Posterior cingulate gyrus (tissue), 11 donors: ENCODE measurements at regions of chr15 and their contacts with region 1.

Region 1: GRCh38 chr15:51776952-51777574 is 25.7 kb downstream of the TMOD2 start:
- DNase-seq: peak in 7 of 10 donors; percentile 31 to 87 (median 67)

Region 2: GRCh38 chr15:51649659-51650521 is 127.2 kb before region 1 on chr15:
- intact Hi-C with region 1: loop called (anchors 1 kb)
- DNase-seq: peak in 2 of 10 donors; percentile 10 to 33

Region 3: GRCh38 chr15:51737280-51738017 is 39.6 kb before region 1 on chr15 and contains the start of gene LYSMD2:
- intact Hi-C with region 1: loop called (anchors 5 kb)
- DNase-seq: peak; percentile 48 to 95 (median 68)

Region 4: GRCh38 chr15:51750792-51751685 is 26.0 kb before region 1 on chr15 and contains the start of gene TMOD2:
- intact Hi-C with region 1: loop called (anchors 2 kb)
- DNase-seq: peak; percentile 38 to 95 (median 68)